BJ (cell line): ENCODE measurements at regions of chr6 and their contacts with region 1.

Region 1: DNA sequence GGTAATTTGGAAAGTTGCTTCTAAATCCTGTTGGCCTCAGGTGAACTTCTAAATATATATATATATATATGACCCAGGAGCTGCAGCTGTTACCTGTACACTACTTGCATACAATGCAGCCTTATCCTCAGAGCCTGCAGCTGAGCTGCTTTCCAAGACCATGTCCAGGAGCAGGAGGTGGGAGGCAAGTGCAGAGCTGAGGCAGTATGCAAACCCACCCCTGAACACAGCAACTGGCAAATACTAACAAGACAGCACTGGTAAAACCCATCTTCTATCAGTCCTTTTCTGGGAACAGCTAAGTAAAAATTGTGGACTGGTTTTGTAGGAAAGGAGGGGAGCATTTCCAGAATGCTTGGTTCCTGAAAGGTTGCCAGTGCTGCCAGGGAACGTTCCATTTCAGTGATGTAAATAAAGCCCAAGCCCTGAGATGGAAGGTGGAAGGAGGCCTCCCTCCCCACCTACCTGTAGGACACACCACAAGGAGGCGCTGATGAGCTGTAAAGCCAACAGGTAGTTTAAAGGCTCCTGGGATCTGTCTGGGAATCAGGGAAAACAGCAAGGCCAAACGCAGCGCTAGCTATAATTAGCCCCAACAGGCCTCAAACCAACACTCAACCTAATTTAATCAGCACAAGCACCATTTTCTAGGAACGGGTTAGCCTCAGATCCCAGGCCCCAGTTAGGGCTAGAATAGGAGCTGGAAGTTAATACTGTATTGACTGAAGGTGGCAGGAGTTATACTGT is 93.8 kb upstream of the MAP7 start:
- DNase-seq: peak; percentile 44
- H3K4me3 ChIP-seq: no peak overlapping the region
- H3K27me3 ChIP-seq: no peaks in the 10 kb centered on the region
- CTCF ChIP-seq: peak; percentile 93

Region 2: DNA sequence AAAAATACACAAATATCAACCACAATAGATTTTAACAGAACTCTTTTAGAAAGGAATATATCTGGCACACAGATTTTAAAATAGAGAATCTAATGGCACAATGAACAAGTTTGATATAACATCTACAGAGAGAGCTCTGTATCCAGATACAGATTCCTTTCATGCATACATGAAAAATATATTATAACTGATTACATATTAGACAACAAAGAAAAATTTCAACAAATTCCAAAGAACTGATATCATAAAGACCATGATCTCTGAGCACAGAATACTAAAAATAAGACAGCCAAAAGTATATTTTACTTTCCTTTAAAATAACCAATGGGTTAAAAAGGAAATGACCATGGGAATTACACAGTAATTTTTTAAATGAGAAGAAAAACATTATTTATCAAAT is 19.7 kb before region 1 on chr6:
- CTCF ChIA-PET with region 1: interaction called, 20 read pairs
- POLR2A ChIA-PET with region 1: no interaction called
- DNase-seq: no peak
- H3K4me3 ChIP-seq: no peak overlapping the region
- H3K27me3 ChIP-seq: no peaks in the 10 kb centered on the region
- CTCF ChIP-seq: no peak

Region 3: DNA sequence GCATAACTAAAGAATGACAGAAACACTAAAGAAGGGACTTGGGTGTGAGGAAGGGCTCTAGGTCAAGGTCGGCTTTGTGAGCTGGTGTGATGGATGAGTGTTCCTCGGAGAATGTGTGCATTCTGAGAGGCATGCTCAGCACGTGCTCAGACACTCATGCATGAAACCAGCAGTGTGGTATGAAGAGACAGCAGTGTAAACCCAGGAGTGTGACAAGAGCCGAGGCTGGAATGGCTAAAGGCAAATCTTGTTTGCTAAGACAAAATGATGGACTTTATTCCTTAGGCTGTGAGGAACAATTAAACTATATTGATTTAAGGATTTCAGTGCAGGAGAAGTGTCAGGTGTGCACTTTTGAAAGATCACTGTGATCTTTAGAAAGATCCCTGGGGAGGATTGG is 13.6 kb after region 1 on chr6:
- CTCF ChIA-PET with region 1: interaction called, 24 read pairs
- POLR2A ChIA-PET with region 1: no interaction called
- DNase-seq: no peak
- H3K4me3 ChIP-seq: no peak overlapping the region
- H3K27me3 ChIP-seq: no peaks in the 10 kb centered on the region
- CTCF ChIP-seq: no peak

Region 4: GRCh38 chr6:136792410-136793262 is 148.6 kb after region 1 on chr6 and contains the start of gene MAP3K5:
- CTCF ChIA-PET with region 1: interaction called, 235 read pairs
- POLR2A ChIA-PET with region 1: interaction called, 3 read pairs
- DNase-seq: peak; percentile 22
- H3K4me3 ChIP-seq: peak within 1 kb of the TSS; percentile 98
- H3K27me3 ChIP-seq: no peaks in the 10 kb centered on the region
- CTCF ChIP-seq: peak; percentile 95
- polyA plus RNA-seq, gene MAP3K5: 2.2 and 2.5 TPM in 2 replicates